GM10248 (cell line): ENCODE measurements at regions of chr12 and their contacts with region 1.

Region 1: GRCh38 chr12:89461649-89462612 is 62.7 kb downstream of the GALNT4 start:
- DNase-seq: peak; percentile 38
- CTCF ChIP-seq: peak; percentile 56

Region 2: GRCh38 chr12:89019408-89020120 is 442.4 kb before region 1 on chr12:
- CTCF ChIA-PET with region 1: interaction called, 90 read pairs
- POLR2A ChIA-PET with region 1: no interaction called
- DNase-seq: peak; percentile 52
- CTCF ChIP-seq: peak; percentile 92

Region 3: DNA sequence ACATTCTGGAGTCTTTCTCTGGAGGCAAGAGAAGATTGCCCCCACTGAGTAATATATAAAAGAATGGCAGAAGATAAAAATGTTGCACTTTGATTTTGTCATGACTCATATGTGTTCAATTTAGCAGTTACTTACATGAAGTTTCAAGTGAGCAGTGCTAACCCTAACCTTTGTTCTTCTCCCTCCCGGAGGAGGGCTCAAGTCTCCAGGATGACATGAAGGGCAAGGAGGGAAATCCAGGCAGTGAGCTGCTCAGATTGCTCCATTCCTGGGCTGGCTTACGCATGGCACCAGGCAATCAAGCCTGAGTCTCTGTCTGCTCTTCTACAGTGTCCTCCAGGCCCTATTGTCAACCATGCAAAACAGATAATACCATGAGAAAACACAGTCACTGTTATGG is 432.0 kb before region 1 on chr12:
- CTCF ChIA-PET with region 1: interaction called, 14 read pairs
- POLR2A ChIA-PET with region 1: no interaction called
- DNase-seq: no peak
- CTCF ChIP-seq: no peak

Region 4: GRCh38 chr12:89040146-89040964 is 421.6 kb before region 1 on chr12:
- CTCF ChIA-PET with region 1: interaction called, 10 read pairs
- POLR2A ChIA-PET with region 1: no interaction called
- DNase-seq: peak; percentile 53
- CTCF ChIP-seq: no peak

Region 5: DNA sequence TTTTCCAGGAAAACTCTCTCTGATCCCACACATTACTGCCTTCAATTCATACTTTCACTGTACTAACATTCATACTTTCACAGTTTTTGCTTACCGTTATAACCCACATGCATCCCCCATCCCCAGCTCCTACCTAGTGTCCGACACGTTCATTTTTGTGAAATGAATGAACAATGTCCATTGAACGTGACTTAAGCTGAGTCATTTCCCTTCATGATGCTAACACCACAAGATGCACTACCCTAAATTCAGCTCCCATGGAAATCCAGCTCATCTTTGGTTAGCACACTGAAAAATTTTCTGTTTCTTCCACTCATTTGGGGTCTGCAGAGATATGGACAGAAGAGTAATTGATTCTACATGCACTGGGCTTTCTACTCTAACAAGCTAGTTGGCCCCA is 22.0 kb before region 1 on chr12:
- CTCF ChIA-PET with region 1: interaction called, 21 read pairs
- POLR2A ChIA-PET with region 1: no interaction called
- DNase-seq: no peak
- CTCF ChIP-seq: no peak

Region 6: DNA sequence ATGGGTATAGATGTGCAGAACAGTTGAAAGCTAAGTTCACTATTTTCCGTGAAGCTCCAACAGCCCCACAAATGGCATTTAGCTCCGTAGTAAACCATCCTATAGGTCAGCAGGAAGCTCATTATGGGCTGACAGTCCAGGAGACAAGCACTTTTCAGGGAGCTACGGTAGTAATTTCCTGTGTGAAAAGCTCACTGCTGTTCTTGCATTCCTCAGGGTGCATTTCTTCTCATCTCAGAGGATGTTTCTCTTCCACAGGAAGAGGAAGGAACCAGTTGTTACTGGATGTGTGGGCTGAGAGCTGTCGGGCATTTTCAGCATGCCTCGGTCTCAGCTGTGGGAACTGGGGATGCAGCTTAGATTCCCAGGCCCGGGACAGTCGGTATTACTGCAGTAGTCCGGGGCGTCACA is 10.1 kb before region 1 on chr12:
- CTCF ChIA-PET with region 1: interaction called, 24 read pairs
- POLR2A ChIA-PET with region 1: no interaction called
- DNase-seq: no peak
- CTCF ChIP-seq: no peak

Region 7: DNA sequence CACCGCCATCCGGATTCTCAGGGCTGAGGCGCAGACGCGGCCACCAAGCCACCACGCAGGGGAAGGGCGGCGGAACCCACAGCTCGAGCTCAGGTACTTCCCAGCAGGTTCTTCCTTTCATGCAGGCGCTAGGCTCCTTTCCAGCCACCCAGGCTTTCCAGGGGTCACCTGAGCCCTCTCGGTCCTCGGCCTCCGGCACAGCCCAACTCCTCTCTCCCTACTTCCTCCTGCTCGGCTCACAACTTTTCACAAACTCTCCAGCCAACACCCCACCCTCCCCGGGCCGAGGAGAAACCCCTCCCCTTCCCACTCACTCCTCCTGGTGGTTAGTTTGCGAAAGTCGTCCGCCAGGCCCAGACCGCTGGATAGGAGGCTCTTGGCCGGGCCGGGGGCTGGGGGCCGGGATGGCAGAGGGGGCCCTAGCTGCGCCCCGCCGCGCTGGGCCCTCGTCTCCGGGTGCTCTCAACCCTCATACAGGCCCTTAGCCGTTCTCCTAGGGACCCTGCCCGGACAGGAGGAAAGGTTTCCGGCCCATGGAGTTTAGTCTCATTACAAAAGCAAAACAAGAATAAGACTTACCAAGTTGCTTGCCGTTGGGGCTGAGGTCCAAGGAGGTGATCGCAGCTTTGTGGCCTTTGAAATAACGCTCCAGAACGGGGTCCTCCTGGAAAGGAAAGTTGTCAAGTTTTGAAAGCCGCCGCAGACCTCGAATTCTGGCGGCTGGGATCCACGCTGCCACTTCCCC is 62.8 kb after region 1 on chr12 and contains the start of gene GALNT4:
- CTCF ChIA-PET with region 1: interaction called, 132 read pairs
- POLR2A ChIA-PET with region 1: no interaction called
- DNase-seq: peak; percentile 88
- CTCF ChIP-seq: peak; percentile 66